Posterior cingulate gyrus (tissue), 11 donors: ENCODE measurements at regions of chr3 and their contacts with region 1.

Region 1: DNA sequence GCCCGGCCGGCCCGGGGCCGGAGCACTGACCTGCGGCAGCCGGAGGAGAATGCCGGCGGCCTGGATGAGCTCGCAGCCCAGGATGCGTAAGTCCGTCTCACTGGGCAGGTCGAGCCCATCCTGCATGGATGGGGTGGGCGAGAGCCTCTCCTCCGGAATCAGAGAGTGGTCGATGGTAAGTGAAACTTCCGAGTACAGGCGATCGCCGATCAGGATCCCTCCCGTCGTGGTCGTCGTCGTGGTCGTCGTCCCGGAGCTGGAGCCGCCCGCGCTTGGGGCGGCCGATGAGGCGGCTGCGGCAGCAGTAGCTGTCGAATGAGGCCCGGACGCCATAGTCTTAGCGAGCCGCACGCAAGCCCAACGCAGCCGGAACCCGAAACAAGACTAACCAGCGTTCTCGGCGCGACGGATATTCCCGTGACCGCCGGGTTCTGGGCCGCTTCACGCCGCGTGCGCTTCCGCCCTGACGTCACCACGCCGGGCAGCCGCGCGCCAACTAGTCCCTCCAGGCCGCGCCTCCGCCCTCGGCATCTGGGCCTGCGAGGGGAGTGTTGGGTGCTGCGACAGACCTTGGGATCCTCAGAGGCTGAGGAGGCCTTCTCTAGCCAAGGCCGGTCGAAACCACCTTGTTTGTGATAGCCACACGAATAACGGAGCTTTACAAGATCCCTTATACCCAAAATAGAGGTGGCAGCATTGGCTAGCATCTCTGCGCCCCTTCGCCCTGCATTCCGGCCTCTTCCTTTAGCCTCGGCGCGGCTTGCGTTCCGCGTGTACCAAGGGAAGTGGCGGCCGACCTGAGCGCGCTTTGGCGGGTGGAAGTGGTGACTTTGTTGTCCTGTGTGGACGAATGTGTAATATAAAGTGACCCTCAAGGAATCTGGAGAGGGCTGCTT is at the start of gene CCNL1:
- DNase-seq: peak; percentile 92 to 99 (median 95)

Region 2: GRCh38 chr3:157174649-157175498 is 14.9 kb after region 1 on chr3:
- intact Hi-C with region 1: loop called (anchors 1 kb)
- DNase-seq: peak; percentile 94 to 100 (median 98)